IMR-90 (cell line): ENCODE measurements at regions of chr11 and their contacts with region 1.

Region 1: GRCh38 chr11:41446107-41446506 is 13.3 kb downstream of the LRRC4C start:
- DNase-seq: no peak
- ATAC-seq: no peak
- H3K4me3 ChIP-seq: no peak overlapping the region
- H3K27ac ChIP-seq: no peak overlapping the region
- H3K4me1 ChIP-seq: no peaks in the 10 kb centered on the region
- H3K27me3 ChIP-seq: no peaks in the 10 kb centered on the region
- CTCF ChIP-seq: no peak
- POLR2A ChIP-seq: no peak
- RAD21 ChIP-seq: no peak

Region 2: GRCh38 chr11:41665441-41666360 is 219.6 kb after region 1 on chr11:
- CTCF ChIA-PET with region 1: no interaction called
- POLR2A ChIA-PET with region 1: no interaction called
- dilution Hi-C with region 1: no loop called
- in situ Hi-C with region 1: no loop called
- intact Hi-C with region 1: loop called (anchors 5 kb)
- DNase-seq: no peak
- ATAC-seq: no peak
- H3K4me3 ChIP-seq: no peak overlapping the region
- H3K27ac ChIP-seq: no peak overlapping the region
- H3K4me1 ChIP-seq: no peaks in the 10 kb centered on the region
- H3K27me3 ChIP-seq: no peaks in the 10 kb centered on the region
- CTCF ChIP-seq: no peak
- POLR2A ChIP-seq: no peak
- RAD21 ChIP-seq: no peak